BJ (cell line): ENCODE measurements at regions of chr11 and their contacts with region 1.

Region 1: DNA sequence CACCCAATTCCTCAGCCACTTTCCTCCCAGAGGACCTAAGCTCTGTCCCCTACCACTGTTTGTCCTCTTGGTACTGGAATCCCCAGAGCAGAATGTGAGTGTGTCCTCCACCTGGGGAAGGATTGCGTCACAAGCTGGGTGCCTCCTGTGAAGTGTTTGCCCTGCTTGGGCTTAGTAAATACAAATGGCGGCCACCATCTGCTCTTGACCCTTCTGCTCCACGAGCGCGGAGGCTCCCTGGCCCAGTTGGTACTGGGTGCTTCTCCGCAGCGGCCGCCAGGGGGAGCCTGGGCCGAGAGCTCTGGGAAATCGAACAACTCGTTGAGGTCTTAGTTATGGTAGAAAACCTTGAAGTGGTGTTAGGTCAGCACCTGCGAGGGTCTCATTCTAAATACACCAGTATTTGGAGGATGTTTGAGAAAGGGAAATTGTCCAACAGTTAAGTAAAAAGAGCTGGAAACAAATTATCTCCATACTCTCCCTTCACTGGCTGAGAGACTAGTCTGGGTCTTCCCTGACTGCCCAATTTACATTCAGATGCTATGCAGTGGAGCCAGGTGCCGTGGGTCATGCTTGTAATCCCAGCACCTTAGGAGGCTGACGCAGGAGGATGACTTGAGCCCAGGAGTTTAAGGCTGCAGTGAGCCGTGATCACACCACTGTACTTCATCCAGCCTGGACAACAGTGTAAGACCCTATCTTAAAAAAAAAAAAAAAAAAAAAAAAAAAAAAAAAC is 74.6 kb upstream of the TEAD1 start:
- DNase-seq: no peak
- H3K4me3 ChIP-seq: no peak overlapping the region
- H3K27me3 ChIP-seq: no peaks in the 10 kb centered on the region
- CTCF ChIP-seq: peak; percentile 48

Region 2: GRCh38 chr11:12281571-12282478 is 317.8 kb before region 1 on chr11:
- CTCF ChIA-PET with region 1: no interaction called
- POLR2A ChIA-PET with region 1: no interaction called
- DNase-seq: no peak
- H3K4me3 ChIP-seq: no peak overlapping the region
- H3K27me3 ChIP-seq: no peaks in the 10 kb centered on the region
- CTCF ChIP-seq: peak; percentile 88

Region 3: DNA sequence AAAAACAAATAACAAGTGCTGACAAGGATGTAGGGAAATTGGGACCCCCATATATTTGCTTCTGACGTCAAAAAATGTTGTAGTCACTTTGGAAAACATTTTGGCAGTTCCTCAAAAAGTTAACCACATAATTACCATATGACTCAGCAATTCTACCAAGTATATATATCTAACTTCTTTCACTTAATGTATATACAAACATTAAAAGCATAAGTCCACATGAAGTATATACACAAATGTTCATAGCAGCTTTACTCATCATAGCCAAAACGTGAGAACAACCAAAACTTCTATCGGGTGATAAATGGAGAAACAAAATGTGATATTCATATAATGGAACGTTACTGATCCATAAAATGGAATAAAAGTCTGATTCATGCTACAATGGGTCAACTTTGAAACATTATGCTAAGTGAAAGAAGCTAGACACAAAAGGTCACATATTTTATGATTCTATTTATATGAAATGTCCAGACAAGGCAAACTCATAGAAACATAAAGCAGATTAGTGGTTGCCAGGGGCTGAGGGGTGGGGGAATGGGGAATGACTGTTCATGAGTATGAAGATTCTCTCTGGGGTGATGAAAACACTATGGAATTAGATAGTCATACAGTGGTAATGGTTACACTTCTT is 26.0 kb after region 1 on chr11:
- CTCF ChIA-PET with region 1: no interaction called
- POLR2A ChIA-PET with region 1: no interaction called
- DNase-seq: peak; percentile 46
- H3K4me3 ChIP-seq: no peak overlapping the region
- H3K27me3 ChIP-seq: no peaks in the 10 kb centered on the region
- CTCF ChIP-seq: no peak

Region 4: GRCh38 chr11:12675951-12676711 is 76.6 kb after region 1 on chr11:
- CTCF ChIA-PET with region 1: no interaction called
- POLR2A ChIA-PET with region 1: interaction called, 10 read pairs
- DNase-seq: no peak
- H3K4me3 ChIP-seq: peak overlapping the region; percentile 61
- H3K27me3 ChIP-seq: no peaks in the 10 kb centered on the region
- CTCF ChIP-seq: no peak